ENCODE measurements at regions of chr2 and their contacts with region 1.

Region 1: DNA sequence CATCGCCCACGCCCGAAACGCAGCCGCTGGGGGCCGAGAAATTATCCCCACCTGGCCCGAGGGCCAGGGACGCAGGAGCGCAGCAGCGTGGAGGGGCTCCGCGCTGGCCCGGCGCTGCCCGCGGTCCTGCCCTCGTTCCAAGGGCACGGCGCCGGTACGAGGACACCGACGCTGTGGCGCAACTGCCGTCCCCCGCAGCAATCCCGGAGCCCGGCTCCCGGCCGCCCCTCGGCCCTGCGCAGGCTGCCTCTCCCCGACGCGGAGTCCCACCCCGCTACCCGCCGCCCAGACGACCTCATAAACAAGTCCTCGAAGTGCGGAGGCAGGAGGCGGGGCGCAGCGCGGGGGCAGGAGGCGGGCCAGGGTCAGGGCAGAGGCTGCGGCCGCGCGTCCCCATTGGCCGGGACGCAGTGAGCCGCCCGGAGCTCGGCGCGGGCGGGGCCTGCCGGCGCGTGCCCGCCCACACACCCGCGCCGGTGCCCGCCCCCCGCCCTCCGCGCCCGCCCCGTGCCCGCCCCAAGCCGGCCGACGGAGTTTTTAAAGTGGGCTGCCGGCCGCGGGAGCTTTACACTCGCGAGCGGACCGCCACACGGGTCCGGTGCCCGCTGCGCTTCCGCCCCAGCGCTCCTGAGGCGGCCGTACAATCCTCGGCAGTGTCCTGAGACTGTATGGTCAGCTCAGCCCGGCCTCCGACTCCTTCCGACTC is at the start of gene EPAS1:
- DNase-seq: peak; percentile 90 to 95 (median 94)
- ATAC-seq: peak; percentile 66 to 83 (median 74)
- H3K4me3 ChIP-seq: peak within 1 kb of the TSS; percentile 65 to 89 (median 79)
- H3K27ac ChIP-seq: peak within 1 kb of the TSS; percentile 84 to 95 (median 87)
- H3K4me1 ChIP-seq: peaks cover 0 to 14% (median 11%) of the 10 kb centered on the region in 3 donors
- H3K27me3 ChIP-seq: no peaks in the 10 kb centered on the region
- CTCF ChIP-seq: no peak
- total RNA-seq, gene EPAS1: 61.8 to 165 (median 85.8) TPM

Region 2: DNA sequence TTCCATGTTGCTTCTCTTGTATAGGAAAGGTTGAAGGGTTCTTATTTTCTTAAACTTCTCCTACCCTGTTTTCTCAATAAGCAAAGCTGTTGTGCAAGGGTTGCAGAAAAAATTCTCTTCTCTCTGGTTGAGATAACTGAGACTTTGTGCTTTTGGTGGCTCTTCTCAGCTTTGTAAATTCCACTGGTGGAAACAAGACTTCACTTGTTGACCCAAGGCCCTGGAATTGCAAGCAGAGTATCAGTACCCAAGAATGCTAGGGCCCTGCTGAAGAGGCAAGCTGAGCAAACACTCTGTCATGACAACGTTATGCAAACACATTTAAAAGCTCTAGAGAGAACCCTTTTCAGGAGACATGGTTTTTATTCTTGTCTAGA is 294.5 kb before region 1 on chr2:
- intact Hi-C with region 1: loop called in 1 of 3 experiments (anchors 10 kb)
- DNase-seq: no peak
- ATAC-seq: peak in 3 of 4 donors; percentile 44 to 66 (median 66)
- H3K4me3 ChIP-seq: no peak overlapping the region
- H3K27ac ChIP-seq: no peak overlapping the region
- H3K4me1 ChIP-seq: peaks cover 0 to 2% (median 0%) of the 10 kb centered on the region in 3 donors
- H3K27me3 ChIP-seq: no peaks in the 10 kb centered on the region
- CTCF ChIP-seq: no peak

Region 3: GRCh38 chr2:46062637-46063412 is 234.2 kb before region 1 on chr2:
- intact Hi-C with region 1: loop called in 1 of 3 experiments (anchors 10 kb)
- DNase-seq: peak in 5 of 6 donors; percentile 42 to 75 (median 69)
- ATAC-seq: peak; percentile 68 to 91 (median 87)
- H3K4me3 ChIP-seq: no peak overlapping the region
- H3K27ac ChIP-seq: no peak overlapping the region
- H3K4me1 ChIP-seq: peaks cover 0 to 3% (median 0%) of the 10 kb centered on the region in 3 donors
- H3K27me3 ChIP-seq: no peaks in the 10 kb centered on the region
- CTCF ChIP-seq: peak; percentile 52 to 82 (median 64)

Region 4: DNA sequence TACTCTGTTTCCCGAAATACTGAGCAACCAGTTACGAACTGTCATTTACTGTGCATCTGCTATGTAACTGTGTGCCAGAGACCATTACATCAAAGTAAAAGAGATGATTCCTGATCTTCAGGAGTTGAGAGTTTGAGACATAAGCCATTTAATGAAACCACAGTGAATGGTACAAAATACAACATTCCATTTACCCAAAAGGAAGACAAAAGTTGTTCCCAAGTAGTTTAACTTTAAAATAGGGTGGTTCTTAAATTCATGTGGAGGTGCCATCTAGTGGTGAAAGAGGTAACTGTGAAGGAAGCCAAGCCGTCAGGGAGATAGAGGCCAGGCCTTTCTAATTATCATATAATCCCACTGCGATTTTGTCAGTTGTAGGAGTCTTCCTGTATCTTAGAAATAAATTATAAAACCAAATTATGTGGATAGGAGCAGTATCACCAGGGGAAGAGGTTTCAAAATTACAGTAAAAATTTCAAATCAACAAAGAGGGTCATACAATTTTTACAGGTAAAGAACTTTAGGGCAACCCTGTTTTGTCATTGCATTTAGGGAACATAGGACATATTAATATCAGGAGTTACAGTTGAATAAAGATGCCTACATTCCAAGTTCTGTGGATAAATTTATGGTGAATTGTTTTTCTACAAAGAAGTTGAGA is 67.9 kb after region 1 on chr2:
- intact Hi-C with region 1: loop called in 2 of 3 experiments (anchors 10 kb)
- DNase-seq: peak in 1 of 6 donors; percentile 45
- ATAC-seq: peak; percentile 61 to 84 (median 82)
- H3K4me3 ChIP-seq: no peak overlapping the region
- H3K27ac ChIP-seq: no peak overlapping the region
- H3K4me1 ChIP-seq: peaks cover 0 to 4% (median 0%) of the 10 kb centered on the region in 3 donors
- H3K27me3 ChIP-seq: no peaks in the 10 kb centered on the region
- CTCF ChIP-seq: peak; percentile 63 to 81 (median 76)

Measured in pancreas (tissue), 10 donors.